ENCODE measurements at regions of chr4 and their contacts with region 1.

Region 1: DNA sequence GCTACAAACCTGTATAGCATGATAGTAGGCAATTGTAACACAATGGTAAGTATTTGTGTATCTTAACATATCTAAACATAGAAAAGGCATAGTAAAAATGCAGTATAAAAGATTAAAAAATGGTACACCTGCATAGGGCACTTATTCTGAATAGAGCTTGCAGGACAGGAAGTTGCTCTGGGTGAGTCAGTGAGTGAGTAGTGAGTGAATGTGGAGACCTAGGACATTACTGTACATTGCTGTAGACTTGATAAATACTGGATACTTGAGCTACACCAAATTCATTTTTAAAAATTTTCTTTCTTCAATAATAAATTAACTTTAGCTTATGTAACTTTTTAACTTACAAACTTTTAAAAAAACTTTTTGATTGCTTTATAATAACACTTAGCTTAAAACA is 68.2 kb upstream of the MAML3 start:
- DNase-seq: no peak
- ATAC-seq: no peak
- H3K4me3 Mint-ChIP-seq: no peak overlapping the region
- H3K27ac Mint-ChIP-seq: no peak overlapping the region
- H3K4me1 Mint-ChIP-seq: peaks cover 2% of the 10 kb centered on the region
- H3K27me3 Mint-ChIP-seq: no peaks in the 10 kb centered on the region

Region 2: DNA sequence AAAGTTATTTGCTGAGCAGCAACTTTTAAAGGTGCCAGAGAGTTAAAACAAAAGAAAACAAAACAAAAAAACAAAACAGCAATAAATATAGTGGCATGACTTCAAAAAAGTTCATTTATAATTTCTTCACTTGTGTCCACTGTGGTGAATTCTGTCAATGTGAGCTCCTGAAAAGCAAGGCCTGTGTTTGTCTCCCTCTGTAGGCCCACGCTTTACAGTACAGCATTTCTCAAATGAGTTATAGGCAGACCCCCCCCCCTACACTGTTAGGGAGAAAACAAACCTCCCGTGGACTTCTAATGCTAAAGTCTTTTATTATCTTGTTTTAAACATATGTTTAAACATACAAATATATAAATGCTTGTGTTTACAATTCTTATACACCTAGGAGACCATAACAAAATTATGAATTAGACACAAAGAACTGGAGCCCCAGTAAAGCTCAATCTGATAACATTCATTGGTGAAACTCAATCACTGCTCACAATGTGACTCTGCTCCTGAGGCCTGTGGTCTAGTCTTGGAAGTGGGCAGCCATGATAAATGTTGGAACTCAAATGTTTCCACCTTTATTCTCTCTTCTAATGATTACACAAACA is 104.3 kb after region 1 on chr4:
- POLR2A ChIA-PET with region 1: interaction called, 10 read pairs
- DNase-seq: no peak
- ATAC-seq: no peak
- H3K4me3 Mint-ChIP-seq: no peak overlapping the region
- H3K27ac Mint-ChIP-seq: no peak overlapping the region
- H3K4me1 Mint-ChIP-seq: peaks cover 13% of the 10 kb centered on the region
- H3K27me3 Mint-ChIP-seq: peaks cover 6% of the 10 kb centered on the region

Region 3: GRCh38 chr4:140373328-140374129 is 151.4 kb after region 1 on chr4 and contains the start of gene SCOC:
- POLR2A ChIA-PET with region 1: no interaction called
- DNase-seq: peak; percentile 91
- ATAC-seq: peak; percentile 97
- H3K4me3 Mint-ChIP-seq: no peak within 1 kb of the TSS
- H3K27ac Mint-ChIP-seq: peak within 1 kb of the TSS; percentile 73
- H3K4me1 Mint-ChIP-seq: peaks cover 19% of the 10 kb centered on the region
- H3K27me3 Mint-ChIP-seq: no peaks in the 10 kb centered on the region
- total RNA-seq, gene SCOC: 24.0 to 26.5 TPM

Measured in activated naive CD8-positive, alpha-beta T cell treated with anti-CD3 and anti-CD28 coated beads, Interleukin-2, amount 10 ng/mL, durations not matched to agents 7 days and 5 days (primary cell).